Dendritic cell treated with granulocyte-macrophage colony-stimulating factor and Interleukin-4, amounts not matched to agents 40 ng/mL and 50 ng/mL, for 4 days (primary cell): ENCODE measurements at regions of chr12 and their contacts with region 1.

Region 1: DNA sequence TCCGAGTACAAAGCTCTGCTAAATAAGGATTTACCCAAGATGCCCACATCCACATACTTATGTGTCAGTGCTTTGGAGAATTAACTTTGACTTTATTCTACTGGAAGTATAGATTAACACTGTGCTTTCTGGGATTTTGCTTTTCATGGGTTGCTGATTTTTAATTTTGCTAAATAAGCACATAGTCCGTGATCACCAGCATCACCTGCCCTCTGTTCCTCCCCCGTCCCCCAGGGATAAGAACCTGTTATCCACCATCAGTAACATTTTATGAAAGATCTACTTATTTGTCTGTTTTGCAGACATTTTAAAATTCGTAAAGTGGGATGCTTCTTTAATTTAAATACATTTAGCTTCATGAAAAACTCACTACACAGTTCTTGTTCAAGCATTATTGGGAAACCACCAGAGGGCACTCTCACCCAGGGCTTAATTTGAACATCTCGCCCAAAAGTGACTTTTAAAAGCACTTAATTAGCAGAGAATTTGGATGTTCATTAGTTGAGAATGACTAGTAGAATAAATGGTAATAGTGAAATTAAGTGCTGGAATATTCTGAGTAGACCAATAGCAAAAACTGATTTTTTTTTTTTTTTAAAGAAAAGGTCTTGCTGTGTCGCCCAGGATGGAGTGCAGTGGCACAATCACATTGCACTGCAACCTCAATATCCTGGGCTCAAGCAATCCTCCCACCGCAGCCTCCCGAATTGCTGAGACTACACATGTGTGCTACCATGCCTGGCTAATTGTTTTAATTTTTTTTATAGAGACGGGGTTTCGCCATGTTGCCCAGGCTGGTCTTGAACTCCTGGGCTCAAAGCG is 35.7 kb downstream of the MRPL42 start:
- H3K4me3 Mint-ChIP-seq: no peak overlapping the region
- H3K27ac Mint-ChIP-seq: no peak overlapping the region
- H3K4me1 Mint-ChIP-seq: no peaks in the 10 kb centered on the region
- H3K27me3 Mint-ChIP-seq: no peaks in the 10 kb centered on the region

Region 2: GRCh38 chr12:93279565-93280412 is 223.2 kb before region 1 on chr12:
- intact Hi-C with region 1: no loop called
- H3K4me3 Mint-ChIP-seq: no peak overlapping the region
- H3K27ac Mint-ChIP-seq: no peak overlapping the region
- H3K4me1 Mint-ChIP-seq: no peaks in the 10 kb centered on the region
- H3K27me3 Mint-ChIP-seq: no peaks in the 10 kb centered on the region

Region 3: DNA sequence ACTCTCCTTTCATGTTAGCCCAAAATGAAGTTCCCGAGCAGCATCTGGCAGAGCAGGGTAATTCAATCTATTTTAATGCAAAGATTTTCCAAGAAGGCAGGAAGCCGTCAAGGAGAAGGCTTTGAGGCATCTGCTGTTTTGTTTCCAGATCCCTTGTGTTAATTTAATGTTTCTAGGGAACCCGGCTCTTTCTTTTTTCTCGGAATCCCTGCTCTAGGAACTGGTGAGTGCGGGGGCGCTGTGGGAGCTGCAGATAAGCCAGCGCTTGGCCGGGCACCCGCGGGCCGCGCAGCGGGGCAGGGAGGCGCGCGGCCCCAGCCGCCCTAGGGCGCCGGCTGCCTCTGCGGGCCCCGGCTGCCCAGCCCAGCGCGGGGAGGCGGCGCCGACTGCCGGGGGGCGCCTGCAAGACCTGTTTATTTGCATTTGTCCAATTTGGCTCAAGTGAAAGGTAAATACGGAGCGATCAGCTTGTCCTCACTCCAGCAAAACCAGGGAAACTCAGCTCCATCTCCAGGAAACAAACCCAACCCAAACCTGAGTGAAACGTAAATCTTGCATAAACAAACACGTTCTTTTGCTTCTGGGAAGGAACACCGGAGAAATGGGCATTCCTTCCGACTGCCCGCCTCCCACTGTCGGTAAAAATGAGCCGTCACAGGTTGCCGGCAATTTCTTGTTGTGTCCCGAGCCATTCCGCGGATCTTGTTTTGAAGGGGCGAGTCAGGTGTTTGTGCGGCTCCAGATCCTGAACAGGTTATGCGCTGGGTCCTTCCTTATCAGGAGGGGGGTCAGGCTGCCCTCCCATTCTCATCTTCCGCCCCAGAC is 239.3 kb after region 1 on chr12:
- intact Hi-C with region 1: loop called (anchors 2 kb)
- H3K4me3 Mint-ChIP-seq: peak overlapping the region; percentile 80
- H3K27ac Mint-ChIP-seq: peak overlapping the region; percentile 93
- H3K4me1 Mint-ChIP-seq: peaks cover 50% of the 10 kb centered on the region
- H3K27me3 Mint-ChIP-seq: peaks cover 2% of the 10 kb centered on the region

Region 4: DNA sequence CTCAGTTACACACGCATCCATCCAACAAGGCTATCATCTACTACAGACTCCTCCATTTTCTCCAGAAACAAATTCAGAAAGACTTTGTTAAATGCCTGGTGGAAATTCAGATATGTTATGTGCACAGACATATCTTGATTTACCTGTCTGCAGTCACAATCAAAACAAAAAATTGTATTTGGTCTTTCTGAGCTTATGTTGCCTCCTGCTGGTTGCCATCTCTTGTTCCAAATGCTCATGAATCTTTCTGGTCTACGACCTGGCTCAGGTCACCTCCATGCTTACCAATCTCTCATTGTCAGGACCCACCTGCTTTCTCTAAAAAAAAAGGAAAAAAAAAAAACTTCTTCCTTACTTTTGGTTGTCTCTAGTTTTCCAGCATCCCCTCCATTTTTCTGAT is 476.2 kb after region 1 on chr12:
- intact Hi-C with region 1: loop called (anchors 10 kb)
- H3K4me3 Mint-ChIP-seq: no peak overlapping the region
- H3K27ac Mint-ChIP-seq: no peak overlapping the region
- H3K4me1 Mint-ChIP-seq: no peaks in the 10 kb centered on the region
- H3K27me3 Mint-ChIP-seq: peaks cover 2% of the 10 kb centered on the region

Region 5: DNA sequence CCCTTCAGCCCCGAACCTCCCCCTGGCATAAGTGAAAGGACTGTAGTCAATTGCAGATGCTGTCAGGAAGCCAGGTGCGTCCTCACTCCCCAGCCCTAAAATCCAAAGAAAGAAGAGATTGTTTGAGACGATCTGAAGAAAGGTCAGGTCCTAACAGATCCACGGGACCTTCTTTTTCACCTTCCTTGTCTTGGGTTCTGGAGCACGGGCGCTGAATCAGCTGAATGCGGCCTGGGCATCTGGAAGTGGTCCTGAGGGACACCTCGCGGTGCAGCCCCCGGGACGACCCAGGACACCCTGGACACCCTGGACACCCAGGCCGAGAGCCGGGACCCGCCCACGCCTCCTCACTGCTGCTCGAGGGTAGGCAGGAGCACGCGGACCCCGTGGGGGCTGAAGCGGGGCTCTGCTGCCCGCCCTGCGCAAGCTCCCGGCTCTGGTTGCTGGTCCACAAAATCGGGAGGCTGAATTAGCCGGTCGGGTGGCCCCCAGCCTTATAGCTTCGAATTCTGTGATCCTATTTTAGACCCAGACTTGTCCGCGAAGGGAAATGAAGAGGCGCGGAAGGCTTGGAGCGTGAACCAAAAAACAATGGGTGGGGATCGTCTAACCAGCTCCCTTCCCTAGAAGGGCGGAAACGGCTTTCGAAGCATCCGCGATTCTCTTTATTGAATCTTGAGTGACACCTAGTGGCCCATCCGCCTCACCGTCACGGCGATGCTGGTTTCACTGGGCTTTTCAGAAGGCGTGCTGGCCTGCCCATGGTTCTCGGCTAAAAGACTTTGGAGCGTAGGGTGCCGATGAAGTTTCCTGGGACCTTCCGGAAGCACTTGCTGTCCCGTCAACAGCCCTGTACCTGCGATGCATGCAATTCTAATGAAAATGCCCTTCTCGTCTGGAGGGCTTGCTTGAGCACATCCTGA is 599.0 kb after region 1 on chr12:
- intact Hi-C with region 1: loop called (anchors 2 kb)
- H3K4me3 Mint-ChIP-seq: peak overlapping the region; percentile 68
- H3K27ac Mint-ChIP-seq: no peak overlapping the region
- H3K4me1 Mint-ChIP-seq: peaks cover 23% of the 10 kb centered on the region
- H3K27me3 Mint-ChIP-seq: peaks cover 50% of the 10 kb centered on the region

Region 6: DNA sequence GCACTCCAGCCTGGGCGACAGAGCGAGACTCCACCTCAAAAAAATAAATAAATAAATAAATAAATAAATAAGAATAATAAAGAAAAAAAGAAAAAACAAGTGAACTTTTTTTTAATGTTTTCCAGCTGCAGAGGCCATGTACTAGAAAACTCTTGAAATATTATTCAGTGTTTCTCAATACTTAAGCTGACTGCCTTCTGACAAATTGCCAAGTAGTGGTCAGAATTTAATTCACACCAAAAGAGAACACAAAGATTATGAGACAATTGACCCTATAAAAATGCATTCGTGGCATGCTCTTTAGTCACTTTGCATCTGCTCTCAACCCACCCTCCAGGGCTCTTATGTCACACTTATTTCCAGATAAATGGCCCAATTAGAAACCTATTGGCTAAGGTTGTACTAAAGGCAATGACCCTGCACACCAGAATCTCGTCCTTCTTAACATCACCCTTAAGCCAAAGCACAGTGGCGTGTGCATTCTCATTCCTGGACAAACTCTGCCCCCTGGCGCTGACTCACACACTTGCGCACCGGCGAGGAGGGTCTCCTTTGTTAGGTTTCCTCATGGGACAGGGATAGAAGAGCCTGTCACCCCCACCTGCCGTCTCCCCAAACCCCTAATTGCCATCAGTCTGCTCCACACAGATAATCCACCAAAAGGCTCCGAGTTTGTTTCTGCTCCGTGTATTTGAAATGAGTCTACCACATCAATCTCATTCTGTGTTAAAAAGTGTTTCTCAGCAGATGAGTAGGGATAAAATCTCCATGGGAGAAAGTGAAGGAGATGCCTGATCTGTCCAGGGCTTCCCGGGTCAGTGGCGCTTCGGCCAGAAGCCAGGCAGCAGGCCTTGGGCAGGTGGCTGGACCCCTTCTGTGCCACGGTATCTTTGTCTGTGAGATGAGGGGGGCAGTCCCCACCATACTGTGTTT is 1029.7 kb after region 1 on chr12:
- intact Hi-C with region 1: loop called (anchors 10 kb)
- H3K4me3 Mint-ChIP-seq: no peak overlapping the region
- H3K27ac Mint-ChIP-seq: no peak overlapping the region
- H3K4me1 Mint-ChIP-seq: peaks cover 11% of the 10 kb centered on the region
- H3K27me3 Mint-ChIP-seq: peaks cover 6% of the 10 kb centered on the region